ENCODE measurements at regions of chr4 and their contacts with region 1.

Region 1: GRCh38 chr4:85778632-85779131 is 303.7 kb downstream of the ARHGAP24 start:
- DNase-seq: no peak
- ATAC-seq: peak; percentile 56
- H3K4me3 ChIP-seq: peak overlapping the region; percentile 2 to 68 (median 45)
- H3K4me3 Mint-ChIP-seq: peak overlapping the region; percentile 89
- H3K27ac ChIP-seq: peak overlapping the region; percentile 67 to 79
- H3K27ac Mint-ChIP-seq: peak overlapping the region; percentile 93
- H3K4me1 ChIP-seq: peaks cover 33 to 55% of the 10 kb centered on the region in 2 donors
- H3K4me1 Mint-ChIP-seq: peaks cover 66% of the 10 kb centered on the region
- H3K27me3 ChIP-seq: no peaks in the 10 kb centered on the region
- H3K27me3 Mint-ChIP-seq: no peaks in the 10 kb centered on the region
- CTCF ChIP-seq: no peak

Region 2: GRCh38 chr4:85792376-85793232 is 13.9 kb after region 1 on chr4:
- CTCF ChIA-PET with region 1: interaction called, 39 read pairs
- POLR2A ChIA-PET with region 1: no interaction called
- intact Hi-C with region 1: loop called (anchors 2 kb)
- DNase-seq: no peak
- ATAC-seq: no peak
- H3K4me3 ChIP-seq: no peak overlapping the region
- H3K4me3 Mint-ChIP-seq: no peak overlapping the region
- H3K27ac ChIP-seq: no peak overlapping the region
- H3K27ac Mint-ChIP-seq: no peak overlapping the region
- H3K4me1 ChIP-seq: peaks cover 5 to 22% of the 10 kb centered on the region in 2 donors
- H3K4me1 Mint-ChIP-seq: peaks cover 44% of the 10 kb centered on the region
- H3K27me3 ChIP-seq: no peaks in the 10 kb centered on the region
- H3K27me3 Mint-ChIP-seq: no peaks in the 10 kb centered on the region
- CTCF ChIP-seq: no peak

Region 3: GRCh38 chr4:85842540-85842939 is 63.9 kb after region 1 on chr4:
- CTCF ChIA-PET with region 1: no interaction called
- POLR2A ChIA-PET with region 1: no interaction called
- intact Hi-C with region 1: loop called (anchors 5 kb)
- DNase-seq: peak; percentile 57
- ATAC-seq: peak; percentile 93
- H3K4me3 ChIP-seq: no peak overlapping the region
- H3K4me3 Mint-ChIP-seq: peak overlapping the region; percentile 68
- H3K27ac ChIP-seq: peak overlapping the region; percentile 25 to 35
- H3K27ac Mint-ChIP-seq: peak overlapping the region; percentile 86
- H3K4me1 ChIP-seq: peaks cover 10 to 13% of the 10 kb centered on the region in 2 donors
- H3K4me1 Mint-ChIP-seq: peaks cover 27% of the 10 kb centered on the region
- H3K27me3 ChIP-seq: no peaks in the 10 kb centered on the region
- H3K27me3 Mint-ChIP-seq: no peaks in the 10 kb centered on the region
- CTCF ChIP-seq: no peak

Region 4: GRCh38 chr4:86359944-86360478 is 581.3 kb after region 1 on chr4 and contains the start of gene MAPK10:
- CTCF ChIA-PET with region 1: no interaction called
- POLR2A ChIA-PET with region 1: no interaction called
- intact Hi-C with region 1: loop called (anchors 10 kb)
- DNase-seq: peak; percentile 95
- ATAC-seq: peak; percentile 97
- H3K4me3 ChIP-seq: peak within 1 kb of the TSS; percentile 38 to 63 (median 56)
- H3K4me3 Mint-ChIP-seq: peak within 1 kb of the TSS; percentile 90
- H3K27ac ChIP-seq: peak within 1 kb of the TSS; percentile 50 to 74
- H3K27ac Mint-ChIP-seq: peak within 1 kb of the TSS; percentile 91
- H3K4me1 ChIP-seq: peaks cover 8 to 10% of the 10 kb centered on the region in 2 donors
- H3K4me1 Mint-ChIP-seq: peaks cover 19% of the 10 kb centered on the region
- H3K27me3 ChIP-seq: no peaks in the 10 kb centered on the region
- H3K27me3 Mint-ChIP-seq: no peaks in the 10 kb centered on the region
- CTCF ChIP-seq: no peak
- total RNA-seq, gene MAPK10: 3.1 and 3.7 TPM in 2 replicates